HepG2 (cell line): ENCODE measurements at regions of chr16 and their contacts with region 1.

Region 1: DNA sequence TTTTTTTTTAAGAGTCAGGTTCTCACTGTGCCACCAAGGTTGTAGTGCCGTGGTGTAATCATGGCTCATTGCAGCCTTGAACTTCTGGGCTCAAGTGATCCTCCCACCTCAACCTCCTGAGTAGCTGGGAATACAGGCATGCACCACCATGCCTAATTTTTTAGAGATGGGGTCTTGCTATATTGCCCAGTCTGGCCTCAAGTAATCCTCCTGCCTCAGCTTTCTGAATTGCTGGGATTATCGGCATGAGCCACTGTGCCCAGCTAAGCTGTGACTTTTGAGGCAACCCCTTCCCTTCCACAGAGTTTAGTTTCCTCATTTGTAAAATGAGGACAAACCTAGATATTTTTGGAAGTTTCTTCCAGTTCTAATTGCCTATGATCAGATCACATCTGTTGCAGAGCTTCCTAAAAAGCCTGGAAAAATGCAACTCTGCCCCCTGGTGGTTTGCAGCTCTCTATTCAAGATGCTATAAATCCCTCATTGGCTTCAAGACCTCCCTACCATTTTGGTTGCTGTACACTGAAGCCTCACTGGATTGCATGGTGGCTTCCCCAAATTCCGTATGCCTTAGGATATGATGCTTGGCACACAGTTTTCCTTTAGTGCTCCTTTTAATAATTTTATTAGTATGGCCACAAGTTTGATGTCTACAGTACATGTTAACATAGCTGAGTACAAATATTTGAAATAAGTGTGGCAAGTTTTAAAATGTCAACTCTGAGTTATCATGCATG is 19.3 kb downstream of the GDE1 start:
- DNase-seq: peak; percentile 84
- ATAC-seq: peak; percentile 94
- H3K4me3 ChIP-seq: no peak overlapping the region
- H3K27ac ChIP-seq: no peak overlapping the region
- H3K4me1 ChIP-seq: no peaks in the 10 kb centered on the region
- H3K27me3 ChIP-seq: no peaks in the 10 kb centered on the region
- CTCF ChIP-seq: peak; percentile 89
- EP300 ChIP-seq: no peak
- POLR2A ChIP-seq: no peak
- RAD21 ChIP-seq: peak; percentile 83

Region 2: GRCh38 chr16:19223235-19224170 is 279.1 kb before region 1 on chr16:
- CTCF ChIA-PET with region 1: no interaction called
- POLR2A ChIA-PET with region 1: no interaction called
- in situ Hi-C with region 1: loop called (anchors 10 kb)
- intact Hi-C with region 1: no loop called
- DNase-seq: peak; percentile 58
- ATAC-seq: no peak
- H3K4me3 ChIP-seq: no peak overlapping the region
- H3K27ac ChIP-seq: no peak overlapping the region
- H3K4me1 ChIP-seq: no peaks in the 10 kb centered on the region
- H3K27me3 ChIP-seq: peaks cover 0 to 11% of the 10 kb centered on the region in 2 experiments; a peak in 1 of 5 replicates
- CTCF ChIP-seq: peak; percentile 81
- EP300 ChIP-seq: no peak
- POLR2A ChIP-seq: no peak
- RAD21 ChIP-seq: peak; percentile 47; the same call in 1 of the 2 replicates

Region 3: DNA sequence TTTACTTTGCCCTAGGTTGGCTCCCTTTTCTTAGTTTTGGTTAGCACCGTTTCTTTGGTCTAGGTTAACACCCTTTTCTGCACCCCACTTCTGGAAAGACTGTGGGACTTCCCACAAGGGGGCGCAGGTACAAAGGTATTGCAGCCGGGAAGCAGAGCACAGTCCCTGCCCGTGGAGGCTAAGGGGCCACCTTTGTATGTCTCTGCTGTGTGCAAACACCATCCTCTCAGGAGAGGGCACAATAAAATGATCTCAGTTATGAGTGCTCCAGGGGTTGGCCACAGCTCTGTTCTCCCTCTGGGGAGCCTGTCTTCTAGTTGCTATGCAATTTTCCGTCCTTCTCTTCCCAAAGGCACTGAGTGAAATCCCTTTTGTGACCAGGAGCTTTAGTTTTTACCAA is 113.3 kb before region 1 on chr16:
- CTCF ChIA-PET with region 1: interaction called, 77 read pairs
- POLR2A ChIA-PET with region 1: interaction called, 8 read pairs
- in situ Hi-C with region 1: loop called (anchors 5 kb)
- intact Hi-C with region 1: loop called (anchors 1 kb)
- DNase-seq: peak; percentile 74
- ATAC-seq: peak; percentile 99
- H3K4me3 ChIP-seq: no peak overlapping the region
- H3K27ac ChIP-seq: no peak overlapping the region
- H3K4me1 ChIP-seq: no peaks in the 10 kb centered on the region
- H3K27me3 ChIP-seq: peaks cover 0 to 4% of the 10 kb centered on the region in 2 experiments; a peak in 1 of 5 replicates
- CTCF ChIP-seq: peak; percentile 96
- EP300 ChIP-seq: no peak
- POLR2A ChIP-seq: no peak
- RAD21 ChIP-seq: peak; percentile 88

Region 4: GRCh38 chr16:19400697-19401096 is 101.9 kb before region 1 on chr16:
- CTCF ChIA-PET with region 1: interaction called, 14 read pairs
- POLR2A ChIA-PET with region 1: no interaction called
- in situ Hi-C with region 1: no loop called
- intact Hi-C with region 1: no loop called
- DNase-seq: no peak
- ATAC-seq: peak; percentile 51; the same call in 2 of the 3 replicates
- H3K4me3 ChIP-seq: no peak overlapping the region
- H3K27ac ChIP-seq: no peak overlapping the region
- H3K4me1 ChIP-seq: peaks cover 14% of the 10 kb centered on the region
- H3K27me3 ChIP-seq: peaks cover 0 to 8% of the 10 kb centered on the region in 2 experiments; a peak in 1 of 5 replicates
- CTCF ChIP-seq: peak; percentile 41
- EP300 ChIP-seq: no peak
- POLR2A ChIP-seq: no peak
- RAD21 ChIP-seq: no peak

Region 5: GRCh38 chr16:19532601-19533000 is 30.0 kb after region 1 on chr16:
- CTCF ChIA-PET with region 1: no interaction called
- POLR2A ChIA-PET with region 1: no interaction called
- in situ Hi-C with region 1: no loop called
- intact Hi-C with region 1: no loop called
- DNase-seq: no peak
- ATAC-seq: no peak
- H3K4me3 ChIP-seq: no peak overlapping the region
- H3K27ac ChIP-seq: no peak overlapping the region
- H3K4me1 ChIP-seq: peaks cover 6% of the 10 kb centered on the region; the same call in 1 of the 2 replicates
- H3K27me3 ChIP-seq: no peaks in the 10 kb centered on the region
- CTCF ChIP-seq: no peak
- EP300 ChIP-seq: no peak
- POLR2A ChIP-seq: no peak
- RAD21 ChIP-seq: no peak